Activated CD4-positive, alpha-beta T cell treated with anti-CD3 and anti-CD28 coated beads, Interleukin-2, amount 10 ng/mL, durations not matched to agents 24 days and 14 days (primary cell): ENCODE measurements at regions of chr2 and their contacts with region 1.

Region 1: GRCh38 chr2:224284134-224284946 is 117.6 kb downstream of the FAM124B start:
- DNase-seq: peak; percentile 72
- H3K4me3 Mint-ChIP-seq: no peak overlapping the region
- H3K27ac Mint-ChIP-seq: no peak overlapping the region
- H3K4me1 Mint-ChIP-seq: no peaks in the 10 kb centered on the region
- H3K27me3 Mint-ChIP-seq: peaks cover 37% of the 10 kb centered on the region

Region 2: GRCh38 chr2:223970343-223971128 is 313.8 kb before region 1 on chr2:
- intact Hi-C with region 1: loop called (anchors 1 kb)
- DNase-seq: peak; percentile 90
- H3K4me3 Mint-ChIP-seq: no peak overlapping the region
- H3K27ac Mint-ChIP-seq: no peak overlapping the region
- H3K4me1 Mint-ChIP-seq: peaks cover 9% of the 10 kb centered on the region
- H3K27me3 Mint-ChIP-seq: no peaks in the 10 kb centered on the region

Region 3: GRCh38 chr2:224039124-224039940 is 245.0 kb before region 1 on chr2 and contains the start of gene SERPINE2:
- intact Hi-C with region 1: loop called (anchors 5 kb)
- DNase-seq: peak; percentile 87
- H3K4me3 Mint-ChIP-seq: peak within 1 kb of the TSS; percentile 97
- H3K27ac Mint-ChIP-seq: peak within 1 kb of the TSS; percentile 49
- H3K4me1 Mint-ChIP-seq: peaks cover 23% of the 10 kb centered on the region
- H3K27me3 Mint-ChIP-seq: peaks cover 49% of the 10 kb centered on the region
- total RNA-seq, gene SERPINE2: 23.2 and 23.9 TPM in 2 replicates